ENCODE measurements at regions of chr7 and their contacts with region 1.

Region 1: DNA sequence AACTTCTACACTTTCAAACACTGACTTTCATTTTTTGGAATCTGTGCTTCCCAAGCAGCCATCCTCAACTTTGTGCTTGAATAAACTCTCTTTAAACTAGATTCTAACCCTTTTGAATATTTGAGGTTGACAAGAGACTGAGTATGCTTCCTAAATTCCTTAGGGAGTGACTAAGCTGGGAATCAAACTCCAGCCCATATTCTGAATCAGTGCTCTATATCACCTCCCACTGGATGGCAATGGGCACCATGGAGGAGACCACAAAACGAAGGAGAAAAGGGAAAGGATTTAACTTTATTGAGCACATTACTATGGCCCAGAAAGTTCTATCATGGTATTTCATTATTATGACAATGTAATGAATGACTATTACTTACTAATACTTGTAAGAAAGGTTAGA is 17.2 kb upstream of the SLC26A4 start:
- DNase-seq: no peak
- H3K4me3 ChIP-seq: no peak overlapping the region
- H3K27ac ChIP-seq: no peak overlapping the region
- H3K4me1 ChIP-seq: no peaks in the 10 kb centered on the region
- H3K27me3 ChIP-seq: no peaks in the 10 kb centered on the region
- CTCF ChIP-seq: peak in 2 of 3 experiments; percentile 15 to 57; a peak in 2 of 4 replicates
- EP300 ChIP-seq: no peak
- POLR2A ChIP-seq: no peak
- RAD21 ChIP-seq: peak in 1 of 2 experiments; percentile 41; a peak in 3 of 4 replicates

Region 2: GRCh38 chr7:107592361-107593024 is 50.9 kb before region 1 on chr7:
- CTCF ChIA-PET with region 1: no interaction called
- POLR2A ChIA-PET with region 1: no interaction called
- DNase-seq: no peak
- H3K4me3 ChIP-seq: no peak overlapping the region
- H3K27ac ChIP-seq: no peak overlapping the region
- H3K4me1 ChIP-seq: peaks cover 0 to 2% (median 0%) of the 10 kb centered on the region in 4 experiments; a peak in 1 of 7 replicates
- H3K27me3 ChIP-seq: no peaks in the 10 kb centered on the region
- CTCF ChIP-seq: no peak
- EP300 ChIP-seq: no peak
- POLR2A ChIP-seq: no peak
- RAD21 ChIP-seq: no peak

Region 3: GRCh38 chr7:107631590-107632491 is 11.6 kb before region 1 on chr7:
- CTCF ChIA-PET with region 1: interaction called, 11 read pairs
- POLR2A ChIA-PET with region 1: no interaction called
- DNase-seq: no peak
- H3K4me3 ChIP-seq: no peak overlapping the region
- H3K27ac ChIP-seq: no peak overlapping the region
- H3K4me1 ChIP-seq: peaks cover 0 to 6% (median 2%) of the 10 kb centered on the region in 4 experiments; a peak in 3 of 7 replicates
- H3K27me3 ChIP-seq: no peaks in the 10 kb centered on the region
- CTCF ChIP-seq: no peak
- EP300 ChIP-seq: no peak
- POLR2A ChIP-seq: no peak
- RAD21 ChIP-seq: no peak

Region 4: DNA sequence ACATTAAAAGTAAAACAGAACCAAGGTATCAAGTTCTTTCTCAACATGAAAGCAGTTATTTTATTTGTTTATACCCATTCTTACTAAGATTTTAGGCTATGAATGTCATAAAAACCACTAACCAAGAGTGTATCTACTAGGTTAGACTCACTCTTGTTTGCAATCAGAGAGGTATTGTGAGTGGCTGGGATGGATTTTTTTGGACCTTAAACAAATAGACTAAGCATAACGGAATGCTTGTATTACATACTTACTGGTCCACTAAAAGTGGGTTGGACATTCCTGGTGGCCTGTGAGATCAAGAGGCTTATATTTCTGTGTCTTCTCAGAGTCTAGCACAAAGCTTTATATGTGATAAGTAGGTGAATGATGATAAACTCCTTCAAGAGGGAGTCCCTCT is 67.9 kb after region 1 on chr7:
- CTCF ChIA-PET with region 1: no interaction called
- POLR2A ChIA-PET with region 1: no interaction called
- DNase-seq: no peak
- H3K4me3 ChIP-seq: no peak overlapping the region
- H3K27ac ChIP-seq: no peak overlapping the region
- H3K4me1 ChIP-seq: no peaks in the 10 kb centered on the region
- H3K27me3 ChIP-seq: no peaks in the 10 kb centered on the region
- CTCF ChIP-seq: no peak
- EP300 ChIP-seq: no peak
- POLR2A ChIP-seq: no peak
- RAD21 ChIP-seq: no peak

Region 5: GRCh38 chr7:108415821-108416536 is 772.6 kb after region 1 on chr7:
- CTCF ChIA-PET with region 1: no interaction called
- POLR2A ChIA-PET with region 1: no interaction called
- DNase-seq: no peak
- H3K4me3 ChIP-seq: no peak overlapping the region
- H3K27ac ChIP-seq: no peak overlapping the region
- H3K4me1 ChIP-seq: peaks cover 0 to 8% (median 0%) of the 10 kb centered on the region in 4 experiments; a peak in 1 of 7 replicates
- H3K27me3 ChIP-seq: no peaks in the 10 kb centered on the region
- CTCF ChIP-seq: no peak
- EP300 ChIP-seq: no peak
- POLR2A ChIP-seq: no peak
- RAD21 ChIP-seq: no peak

Measured in H1 (cell line).